ENCODE measurements at regions of chr11 and their contacts with region 1.

Region 1: GRCh38 chr11:65615229-65615941 is at the start of gene PCNX3:
- DNase-seq: peak; percentile 100
- ATAC-seq: peak; percentile 93
- H3K4me3 Mint-ChIP-seq: peak within 1 kb of the TSS; percentile 96
- H3K27ac Mint-ChIP-seq: peak within 1 kb of the TSS; percentile 94
- H3K4me1 Mint-ChIP-seq: peaks cover 38% of the 10 kb centered on the region
- H3K27me3 Mint-ChIP-seq: no peaks in the 10 kb centered on the region
- total RNA-seq, gene PCNX3: 27.9 to 30.7 TPM

Region 2: DNA sequence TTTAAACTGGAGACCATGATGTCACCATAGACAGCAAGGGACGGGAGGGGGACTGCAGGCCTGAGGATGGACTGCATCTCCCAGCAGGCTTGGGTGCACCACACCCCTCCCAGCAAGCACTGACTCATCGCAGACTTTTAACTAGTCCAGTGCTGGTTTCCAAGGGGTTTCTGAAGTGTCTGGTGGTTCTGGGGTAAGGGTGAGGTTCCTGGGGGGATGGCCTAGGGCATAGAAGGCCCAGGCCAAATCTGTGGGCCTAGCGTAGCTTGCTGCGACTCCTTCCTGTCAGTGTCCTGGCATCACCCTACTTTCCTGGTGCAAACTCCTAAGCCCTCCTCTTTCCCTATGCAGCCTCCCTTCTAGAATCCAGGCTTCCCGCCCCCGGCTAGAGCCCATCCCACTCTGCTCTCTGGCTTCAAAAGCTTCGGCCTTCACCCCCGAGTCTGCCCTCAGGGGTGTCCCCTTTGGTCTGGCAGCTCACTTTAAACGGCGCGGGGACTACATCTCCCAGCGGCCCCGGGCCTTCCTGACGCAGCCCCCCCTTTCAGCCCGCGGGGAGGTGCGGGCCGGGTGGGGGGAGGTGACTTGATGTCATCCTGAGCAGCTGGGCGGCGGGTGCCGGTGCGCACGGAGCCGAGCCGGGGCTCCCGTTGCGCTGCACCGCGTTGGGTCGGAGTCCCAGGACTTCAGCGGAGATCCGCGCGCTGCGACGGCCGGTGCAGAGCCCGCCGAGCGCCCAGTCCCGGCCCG is 691.1 kb before region 1 on chr11 and contains the start of gene PPP2R5B:
- CTCF ChIA-PET with region 1: no interaction called
- POLR2A ChIA-PET with region 1: no interaction called
- intact Hi-C with region 1: loop called in 1 of 2 experiments (anchors 1 kb)
- DNase-seq: peak; percentile 95
- ATAC-seq: peak; percentile 95
- H3K4me3 Mint-ChIP-seq: peak within 1 kb of the TSS; percentile 81
- H3K27ac Mint-ChIP-seq: peak within 1 kb of the TSS; percentile 98
- H3K4me1 Mint-ChIP-seq: peaks cover 9% of the 10 kb centered on the region
- H3K27me3 Mint-ChIP-seq: no peaks in the 10 kb centered on the region
- total RNA-seq, gene PPP2R5B: 13.2 to 13.5 TPM

Region 3: GRCh38 chr11:65418711-65419459 is 196.5 kb before region 1 on chr11:
- CTCF ChIA-PET with region 1: no interaction called
- POLR2A ChIA-PET with region 1: interaction called, 3 read pairs
- intact Hi-C with region 1: loop called in 1 of 2 experiments (anchors 1 kb)
- DNase-seq: peak; percentile 97
- ATAC-seq: peak; percentile 48
- H3K4me3 Mint-ChIP-seq: peak overlapping the region; percentile 100
- H3K27ac Mint-ChIP-seq: peak overlapping the region; percentile 99
- H3K4me1 Mint-ChIP-seq: peaks cover 34% of the 10 kb centered on the region
- H3K27me3 Mint-ChIP-seq: peaks cover 6% of the 10 kb centered on the region

Region 4: DNA sequence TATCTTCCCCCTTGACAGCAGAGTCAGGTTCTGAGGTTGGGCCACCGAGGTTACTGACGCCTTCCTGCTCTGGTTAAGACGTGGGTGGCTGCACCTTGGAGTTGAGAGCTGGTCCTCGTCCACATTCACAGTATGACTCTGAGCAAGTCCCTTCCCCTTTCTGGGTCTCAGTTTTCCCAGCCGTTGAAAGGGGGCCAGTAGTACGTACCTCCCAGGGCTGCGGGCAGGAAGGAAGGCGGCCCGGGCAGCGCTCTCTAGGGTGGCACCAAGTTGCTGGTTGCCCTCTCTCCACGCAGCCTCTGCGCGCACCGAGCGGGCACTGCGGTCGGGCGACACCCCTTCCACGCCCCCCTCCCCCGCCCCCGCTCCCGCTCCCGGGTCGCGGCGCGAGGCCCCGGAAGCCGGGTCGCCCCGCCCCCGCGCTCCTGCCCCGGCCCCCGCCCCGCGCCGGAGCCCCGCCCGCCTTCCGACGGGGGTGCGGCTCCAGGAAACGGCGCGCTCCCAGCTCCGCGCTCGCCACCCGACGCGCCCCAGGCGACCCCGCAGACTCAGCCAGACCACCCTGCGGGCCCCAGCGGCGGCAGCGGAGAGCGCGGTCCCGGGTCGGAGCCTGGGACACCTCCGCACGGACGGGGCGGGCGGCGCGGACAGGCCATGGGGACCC is 39.7 kb before region 1 on chr11 and contains the start of gene EHBP1L1:
- CTCF ChIA-PET with region 1: interaction called, 20 read pairs
- POLR2A ChIA-PET with region 1: interaction called, 9 read pairs
- intact Hi-C with region 1: loop called (anchors 1 kb)
- DNase-seq: peak; percentile 85
- ATAC-seq: peak; percentile 28
- H3K4me3 Mint-ChIP-seq: peak within 1 kb of the TSS; percentile 90
- H3K27ac Mint-ChIP-seq: peak within 1 kb of the TSS; percentile 95
- H3K4me1 Mint-ChIP-seq: peaks cover 49% of the 10 kb centered on the region
- H3K27me3 Mint-ChIP-seq: no peaks in the 10 kb centered on the region
- total RNA-seq, gene EHBP1L1: 88.3 to 98.8 TPM

Region 5: GRCh38 chr11:65652511-65653231 is 37.3 kb after region 1 on chr11:
- CTCF ChIA-PET with region 1: interaction called, 3 read pairs
- POLR2A ChIA-PET with region 1: no interaction called
- intact Hi-C with region 1: loop called in 1 of 2 experiments (anchors 1 kb)
- DNase-seq: peak; percentile 98
- ATAC-seq: peak; percentile 89
- H3K4me3 Mint-ChIP-seq: peak overlapping the region; percentile 79
- H3K27ac Mint-ChIP-seq: peak overlapping the region; percentile 95
- H3K4me1 Mint-ChIP-seq: peaks cover 45% of the 10 kb centered on the region
- H3K27me3 Mint-ChIP-seq: no peaks in the 10 kb centered on the region

Region 6: GRCh38 chr11:65833297-65834030 is 218.1 kb after region 1 on chr11 and contains the start of gene SNX32:
- CTCF ChIA-PET with region 1: interaction called, 3 read pairs
- POLR2A ChIA-PET with region 1: no interaction called
- intact Hi-C with region 1: loop called in 1 of 2 experiments (anchors 1 kb)
- DNase-seq: peak; percentile 98
- ATAC-seq: peak; percentile 99
- H3K4me3 Mint-ChIP-seq: no peak within 1 kb of the TSS
- H3K27ac Mint-ChIP-seq: no peak within 1 kb of the TSS
- H3K4me1 Mint-ChIP-seq: peaks cover 22% of the 10 kb centered on the region
- H3K27me3 Mint-ChIP-seq: no peaks in the 10 kb centered on the region
- total RNA-seq, gene SNX32: 2.9 to 3.0 TPM

Region 7: DNA sequence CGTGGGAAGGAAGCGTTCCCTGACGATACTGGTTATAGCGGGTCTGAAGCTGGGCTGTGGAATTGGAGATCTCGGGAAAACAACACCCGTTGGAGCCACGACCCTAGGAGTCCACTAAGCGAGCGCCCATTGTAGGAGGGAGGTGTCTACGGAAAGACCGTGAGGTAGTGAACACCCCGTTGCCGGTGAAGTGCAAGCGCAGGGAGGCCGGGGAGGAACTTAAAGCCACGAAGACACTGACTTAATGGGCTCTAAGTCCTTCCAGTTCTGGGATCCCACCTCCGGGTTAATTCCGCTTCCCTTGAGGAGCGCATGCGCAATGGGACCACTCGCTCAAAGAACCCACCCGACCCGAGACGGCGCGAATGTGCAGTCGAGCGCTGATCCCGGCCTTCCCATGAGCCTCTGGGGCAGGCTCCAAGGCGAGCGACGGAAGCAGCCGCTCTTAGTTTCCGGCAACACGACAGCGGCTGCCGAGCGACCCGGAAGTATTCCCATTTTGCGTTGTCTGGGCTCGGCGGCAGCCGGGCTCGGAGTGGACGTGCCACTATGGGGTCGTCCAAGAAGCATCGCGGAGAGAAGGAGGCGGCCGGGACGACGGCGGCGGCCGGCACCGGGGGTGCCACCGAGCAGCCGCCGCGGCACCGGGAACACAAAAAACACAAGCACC is 346.0 kb after region 1 on chr11 and contains the start of gene SART1:
- CTCF ChIA-PET with region 1: no interaction called
- POLR2A ChIA-PET with region 1: no interaction called
- intact Hi-C with region 1: loop called in 1 of 2 experiments (anchors 1 kb)
- DNase-seq: peak; percentile 98
- ATAC-seq: peak; percentile 91
- H3K4me3 Mint-ChIP-seq: peak within 1 kb of the TSS; percentile 92
- H3K27ac Mint-ChIP-seq: peak within 1 kb of the TSS; percentile 97
- H3K4me1 Mint-ChIP-seq: peaks cover 37% of the 10 kb centered on the region
- H3K27me3 Mint-ChIP-seq: no peaks in the 10 kb centered on the region
- total RNA-seq, gene SART1: 54.7 to 84.5 TPM

Measured in activated CD4-positive, alpha-beta T cell treated with anti-CD3 and anti-CD28 coated beads for 36 hours (primary cell).